Mammary epithelial cell (primary cell): ENCODE measurements at regions of chr20 and their contacts with region 1.

Region 1: DNA sequence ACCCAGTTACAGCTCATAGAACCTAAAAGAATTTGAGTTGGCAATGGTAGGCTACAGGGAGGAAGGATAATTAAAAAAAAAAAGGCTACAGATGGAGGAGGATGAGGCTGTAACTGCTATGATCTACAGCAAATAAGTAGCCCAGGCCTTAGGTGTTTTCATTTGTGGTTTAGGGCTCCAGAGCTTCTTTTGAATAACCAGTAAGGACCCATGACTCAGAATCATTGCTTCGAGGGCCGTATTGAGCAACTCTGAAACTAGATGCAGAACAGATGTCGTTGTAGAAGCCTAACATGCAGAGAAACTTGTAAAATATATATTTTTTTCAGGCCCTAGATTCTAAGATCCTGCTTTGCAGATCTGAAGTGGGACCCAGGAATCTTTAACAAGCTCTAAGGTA is 19.0 kb upstream of the ASIP start:
- DNase-seq: peak; percentile 85
- H3K4me3 ChIP-seq: no peak overlapping the region
- H3K27ac ChIP-seq: no peak overlapping the region
- H3K4me1 ChIP-seq: no peaks in the 10 kb centered on the region
- H3K27me3 ChIP-seq: no peaks in the 10 kb centered on the region
- CTCF ChIP-seq: no peak

Region 2: GRCh38 chr20:34415079-34415478 is 192.9 kb after region 1 on chr20:
- CTCF ChIA-PET with region 1: no interaction called
- dilution Hi-C with region 1: no loop called
- in situ Hi-C with region 1: no loop called
- intact Hi-C with region 1: no loop called
- DNase-seq: no peak
- H3K4me3 ChIP-seq: no peak overlapping the region
- H3K27ac ChIP-seq: no peak overlapping the region
- H3K4me1 ChIP-seq: no peaks in the 10 kb centered on the region
- H3K27me3 ChIP-seq: no peaks in the 10 kb centered on the region
- CTCF ChIP-seq: no peak

Region 3: DNA sequence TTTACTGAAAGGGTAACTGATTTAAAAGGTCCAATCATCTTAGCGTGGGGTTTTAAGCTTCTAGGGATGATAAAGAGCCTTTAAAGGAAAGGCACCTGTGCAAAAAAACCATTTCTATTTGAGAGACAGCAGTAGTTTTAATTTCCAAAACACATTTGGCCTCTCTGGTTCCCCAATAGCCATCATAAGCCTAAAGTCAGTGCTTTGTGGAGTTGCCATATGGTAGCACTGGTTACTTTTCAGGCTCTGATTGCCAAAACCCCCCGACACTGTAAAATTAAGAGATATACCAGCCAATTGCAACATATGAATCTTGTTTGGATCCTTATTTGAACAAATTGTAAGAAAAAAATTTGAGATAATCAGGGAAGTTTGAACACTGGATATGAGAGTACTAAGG is 526.5 kb after region 1 on chr20:
- CTCF ChIA-PET with region 1: interaction called, 20 read pairs
- dilution Hi-C with region 1: no loop called
- in situ Hi-C with region 1: no loop called
- intact Hi-C with region 1: no loop called
- DNase-seq: no peak
- H3K4me3 ChIP-seq: no peak overlapping the region
- H3K27ac ChIP-seq: no peak overlapping the region
- H3K4me1 ChIP-seq: peaks cover 2% of the 10 kb centered on the region
- H3K27me3 ChIP-seq: no peaks in the 10 kb centered on the region
- CTCF ChIP-seq: no peak